Activated B cell treated with CpG ODN at 0.5 μM for 24 hours (primary cell): ENCODE measurements at regions of chr3 and their contacts with region 1.

Region 1: DNA sequence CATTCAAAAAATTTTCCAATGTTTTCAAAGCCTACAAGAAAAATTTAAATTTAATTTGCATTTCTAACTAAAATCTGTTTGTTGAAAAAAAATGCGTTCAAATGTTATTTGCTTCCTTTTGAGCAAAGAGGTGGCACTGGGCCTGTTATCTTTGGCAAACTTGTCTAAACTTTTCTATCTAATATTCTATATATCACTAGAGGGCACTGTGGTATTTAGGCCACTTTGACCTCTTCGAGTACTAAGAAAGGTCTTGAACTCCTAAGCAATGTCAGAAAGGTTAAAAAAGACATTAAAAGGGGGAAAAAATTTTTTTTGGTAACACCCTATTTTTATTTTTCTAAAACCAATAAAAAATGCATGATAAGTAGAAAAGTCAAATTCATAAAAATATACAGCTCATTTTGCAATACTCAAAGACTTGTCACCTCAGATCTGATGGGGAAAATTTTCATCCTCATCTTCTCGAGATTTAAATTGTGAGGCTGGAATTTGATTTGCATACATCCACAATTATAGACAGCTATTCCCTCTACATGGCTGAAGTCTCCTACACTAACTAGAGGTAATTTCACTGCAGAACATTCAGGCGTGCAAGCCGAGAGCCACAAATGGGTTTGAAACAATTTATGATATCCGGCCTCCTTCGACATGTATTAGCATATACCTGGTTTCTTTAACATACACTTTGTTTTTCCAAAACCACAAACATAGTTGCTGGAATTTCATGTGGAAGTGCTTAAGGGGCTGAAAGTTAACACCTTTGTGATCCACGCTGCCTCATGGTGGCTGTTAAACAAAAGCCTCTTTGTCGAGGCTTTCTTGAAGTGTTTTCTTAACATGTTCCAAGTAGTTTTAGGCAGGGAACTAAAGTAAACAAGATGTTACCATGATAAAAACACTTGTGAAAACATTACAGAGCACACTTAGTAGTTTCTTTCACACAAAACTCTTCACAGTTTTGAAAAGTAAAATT is 576.4 kb downstream of the FOXP1 start:
- DNase-seq: no peak
- ATAC-seq: peak; percentile 35
- H3K4me3 Mint-ChIP-seq: no peak overlapping the region
- H3K27ac Mint-ChIP-seq: peak overlapping the region; percentile 84
- H3K4me1 Mint-ChIP-seq: peaks cover 73% of the 10 kb centered on the region
- H3K27me3 Mint-ChIP-seq: no peaks in the 10 kb centered on the region
- CTCF ChIP-seq: peak; percentile 75

Region 2: GRCh38 chr3:70550723-70551319 is 456.3 kb before region 1 on chr3:
- CTCF ChIA-PET with region 1: interaction called, 3 read pairs
- POLR2A ChIA-PET with region 1: no interaction called
- intact Hi-C with region 1: loop called (anchors 10 kb)
- DNase-seq: peak; percentile 61
- ATAC-seq: peak; percentile 75
- H3K4me3 Mint-ChIP-seq: no peak overlapping the region
- H3K27ac Mint-ChIP-seq: no peak overlapping the region
- H3K4me1 Mint-ChIP-seq: no peaks in the 10 kb centered on the region
- H3K27me3 Mint-ChIP-seq: peaks cover 4% of the 10 kb centered on the region
- CTCF ChIP-seq: no peak

Region 3: GRCh38 chr3:71050538-71051258 is 43.6 kb after region 1 on chr3:
- CTCF ChIA-PET with region 1: interaction called, 3 read pairs
- POLR2A ChIA-PET with region 1: interaction called, 4 read pairs
- intact Hi-C with region 1: loop called (anchors 5 kb)
- DNase-seq: no peak
- ATAC-seq: no peak
- H3K4me3 Mint-ChIP-seq: peak overlapping the region; percentile 44
- H3K27ac Mint-ChIP-seq: peak overlapping the region; percentile 72
- H3K4me1 Mint-ChIP-seq: peaks cover 100% of the 10 kb centered on the region
- H3K27me3 Mint-ChIP-seq: no peaks in the 10 kb centered on the region
- CTCF ChIP-seq: no peak

Region 4: DNA sequence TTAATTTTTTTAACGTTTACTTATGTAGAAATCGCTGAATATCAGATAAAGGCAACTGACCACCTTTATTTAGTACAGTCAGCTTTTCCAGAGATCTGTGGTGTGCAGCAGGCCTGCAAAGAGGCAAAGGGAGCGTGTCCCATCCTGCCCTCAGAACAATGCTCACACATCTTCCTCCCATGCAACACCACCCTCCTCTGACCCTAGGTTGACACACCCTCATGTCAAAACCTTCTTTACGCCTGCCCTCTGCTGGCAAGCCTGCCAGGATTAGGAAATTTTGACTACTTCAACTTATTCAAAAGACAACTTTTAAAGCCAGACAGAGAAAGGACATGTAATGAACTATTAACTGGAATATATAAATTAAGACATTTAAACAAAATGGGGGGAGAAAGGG is 62.7 kb after region 1 on chr3:
- CTCF ChIA-PET with region 1: interaction called, 8 read pairs
- POLR2A ChIA-PET with region 1: interaction called, 59 read pairs
- intact Hi-C with region 1: loop called (anchors 1 kb)
- DNase-seq: no peak
- ATAC-seq: peak; percentile 44
- H3K4me3 Mint-ChIP-seq: peak overlapping the region; percentile 36
- H3K27ac Mint-ChIP-seq: peak overlapping the region; percentile 79
- H3K4me1 Mint-ChIP-seq: peaks cover 89% of the 10 kb centered on the region
- H3K27me3 Mint-ChIP-seq: no peaks in the 10 kb centered on the region
- CTCF ChIP-seq: no peak

Region 5: GRCh38 chr3:71226565-71227269 is 219.6 kb after region 1 on chr3:
- CTCF ChIA-PET with region 1: no interaction called
- POLR2A ChIA-PET with region 1: interaction called, 5 read pairs
- intact Hi-C with region 1: loop called (anchors 2 kb)
- DNase-seq: peak; percentile 50
- ATAC-seq: peak; percentile 76
- H3K4me3 Mint-ChIP-seq: peak overlapping the region; percentile 89
- H3K27ac Mint-ChIP-seq: peak overlapping the region; percentile 97
- H3K4me1 Mint-ChIP-seq: peaks cover 76% of the 10 kb centered on the region
- H3K27me3 Mint-ChIP-seq: no peaks in the 10 kb centered on the region
- CTCF ChIP-seq: no peak

Region 6: GRCh38 chr3:71389911-71390573 is 382.9 kb after region 1 on chr3:
- CTCF ChIA-PET with region 1: no interaction called
- POLR2A ChIA-PET with region 1: interaction called, 3 read pairs
- intact Hi-C with region 1: loop called (anchors 1 kb)
- DNase-seq: no peak
- ATAC-seq: peak; percentile 6
- H3K4me3 Mint-ChIP-seq: peak overlapping the region; percentile 73
- H3K27ac Mint-ChIP-seq: peak overlapping the region; percentile 99
- H3K4me1 Mint-ChIP-seq: peaks cover 86% of the 10 kb centered on the region
- H3K27me3 Mint-ChIP-seq: no peaks in the 10 kb centered on the region
- CTCF ChIP-seq: no peak

Region 7: GRCh38 chr3:71652781-71653413 is 645.8 kb after region 1 on chr3:
- CTCF ChIA-PET with region 1: no interaction called
- POLR2A ChIA-PET with region 1: no interaction called
- intact Hi-C with region 1: loop called (anchors 1 kb)
- DNase-seq: no peak
- ATAC-seq: peak; percentile 68
- H3K4me3 Mint-ChIP-seq: no peak overlapping the region
- H3K27ac Mint-ChIP-seq: no peak overlapping the region
- H3K4me1 Mint-ChIP-seq: peaks cover 3% of the 10 kb centered on the region
- H3K27me3 Mint-ChIP-seq: no peaks in the 10 kb centered on the region
- CTCF ChIP-seq: no peak